ENCODE measurements at regions of chr16 and their contacts with region 1.

Region 1: GRCh38 chr16:55367866-55368603 is 44.0 kb downstream of the IRX6 start:
- DNase-seq: no peak
- H3K4me3 Mint-ChIP-seq: no peak overlapping the region
- H3K27ac Mint-ChIP-seq: no peak overlapping the region
- H3K4me1 Mint-ChIP-seq: no peaks in the 10 kb centered on the region
- H3K27me3 Mint-ChIP-seq: peaks cover 25% of the 10 kb centered on the region
- CTCF ChIP-seq: no peak

Region 2: DNA sequence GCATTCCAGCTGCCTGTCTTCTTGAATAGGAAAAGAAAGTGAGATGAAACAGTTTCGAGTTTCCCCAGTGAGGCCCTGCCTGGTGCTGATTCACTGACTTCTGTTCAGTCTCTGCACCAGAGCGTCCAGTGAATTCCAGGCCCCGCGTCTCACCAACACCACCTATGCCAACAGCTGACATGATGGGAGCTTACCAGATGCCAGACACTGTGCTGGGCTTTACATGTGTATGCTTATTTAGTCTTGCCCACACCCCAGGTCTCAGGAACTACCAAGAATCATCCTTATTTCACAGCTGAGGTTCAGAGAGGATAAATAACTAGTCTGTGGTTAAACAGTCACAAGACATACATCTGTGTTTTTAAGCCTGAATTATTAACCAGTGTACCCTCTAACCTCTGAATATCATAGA is 73.1 kb before region 1 on chr16:
- CTCF ChIA-PET with region 1: no interaction called
- intact Hi-C with region 1: loop called (anchors 10 kb)
- DNase-seq: no peak
- H3K4me3 Mint-ChIP-seq: no peak overlapping the region
- H3K27ac Mint-ChIP-seq: no peak overlapping the region
- H3K4me1 Mint-ChIP-seq: peaks cover 9% of the 10 kb centered on the region
- H3K27me3 Mint-ChIP-seq: no peaks in the 10 kb centered on the region
- CTCF ChIP-seq: no peak

Region 3: GRCh38 chr16:55529018-55529417 is 161.0 kb after region 1 on chr16:
- CTCF ChIA-PET with region 1: no interaction called
- intact Hi-C with region 1: no loop called
- DNase-seq: no peak
- H3K4me3 Mint-ChIP-seq: no peak overlapping the region
- H3K27ac Mint-ChIP-seq: no peak overlapping the region
- H3K4me1 Mint-ChIP-seq: no peaks in the 10 kb centered on the region
- H3K27me3 Mint-ChIP-seq: no peaks in the 10 kb centered on the region
- CTCF ChIP-seq: no peak